ENCODE measurements at regions of chr1 and their contacts with region 1.

Region 1: DNA sequence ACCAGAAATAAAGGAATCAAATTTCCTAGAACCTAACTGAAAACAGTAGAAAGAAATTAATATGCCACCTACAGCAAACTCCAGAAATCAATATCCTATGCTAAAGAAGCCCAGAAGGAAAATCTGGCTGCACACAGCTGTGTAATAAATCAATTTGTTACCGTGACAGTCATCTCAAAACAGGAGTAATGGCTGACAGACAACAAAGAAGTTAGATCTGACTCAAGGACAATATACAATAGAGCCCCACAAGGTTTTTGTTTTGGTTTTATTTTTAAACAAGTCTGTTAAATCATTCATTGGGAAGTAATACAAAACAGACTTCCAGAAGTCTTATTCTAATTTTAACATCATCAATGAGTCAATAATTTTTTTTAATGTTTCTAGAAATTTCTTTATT is 168.4 kb downstream of the RERE start:
- DNase-seq: peak; percentile 85
- H3K4me3 ChIP-seq: no peak overlapping the region
- H3K27ac ChIP-seq: peak overlapping the region; percentile 33
- H3K4me1 ChIP-seq: peaks cover 35% of the 10 kb centered on the region
- H3K27me3 ChIP-seq: no peaks in the 10 kb centered on the region
- CTCF ChIP-seq: no peak
- POLR2A ChIP-seq: no peak

Region 2: GRCh38 chr1:8314346-8315280 is 334.4 kb before region 1 on chr1:
- CTCF ChIA-PET with region 1: no interaction called
- POLR2A ChIA-PET with region 1: no interaction called
- dilution Hi-C with region 1: no loop called
- intact Hi-C with region 1: no loop called
- DNase-seq: peak; percentile 76
- H3K4me3 ChIP-seq: no peak overlapping the region
- H3K27ac ChIP-seq: no peak overlapping the region
- H3K4me1 ChIP-seq: peaks cover 7% of the 10 kb centered on the region
- H3K27me3 ChIP-seq: no peaks in the 10 kb centered on the region
- CTCF ChIP-seq: peak; percentile 86 to 88
- POLR2A ChIP-seq: no peak

Region 3: DNA sequence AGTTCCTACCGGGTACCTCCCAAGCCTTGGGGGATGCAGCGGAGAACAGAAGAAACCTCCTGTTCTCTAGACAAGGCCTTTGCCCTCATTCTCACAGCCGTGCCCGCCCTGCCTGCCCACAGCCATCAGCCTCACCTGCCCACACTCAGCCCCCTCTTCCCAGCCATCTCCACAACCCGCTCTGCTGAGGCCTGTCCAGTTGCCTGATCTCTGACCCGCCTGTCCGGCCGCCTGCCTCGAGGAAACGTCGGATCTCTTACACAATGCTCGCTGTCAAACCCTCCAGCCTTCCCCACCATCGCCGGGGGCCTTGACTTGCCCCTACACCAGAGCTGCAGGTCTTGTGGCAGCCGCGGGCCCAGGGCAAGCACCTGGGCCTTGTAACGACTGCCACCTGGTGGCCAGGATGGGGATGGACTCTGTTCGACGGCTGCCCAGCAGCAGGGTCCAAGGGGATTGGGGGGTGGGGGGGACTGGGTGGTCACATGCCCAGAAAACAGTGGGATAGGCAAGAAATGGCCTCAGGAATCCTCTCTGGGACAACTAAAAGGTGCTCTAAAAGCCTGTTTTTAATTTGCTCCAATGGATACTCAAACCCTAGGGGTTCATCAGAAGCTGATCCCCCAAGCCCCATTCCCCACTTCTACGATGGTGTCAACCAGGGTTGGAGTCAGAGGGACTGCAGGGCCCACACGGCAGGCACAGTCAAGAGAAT is 300.1 kb before region 1 on chr1:
- CTCF ChIA-PET with region 1: no interaction called
- POLR2A ChIA-PET with region 1: no interaction called
- dilution Hi-C with region 1: no loop called
- intact Hi-C with region 1: no loop called
- DNase-seq: peak; percentile 48
- H3K4me3 ChIP-seq: no peak overlapping the region
- H3K27ac ChIP-seq: no peak overlapping the region
- H3K4me1 ChIP-seq: peaks cover 16% of the 10 kb centered on the region
- H3K27me3 ChIP-seq: no peaks in the 10 kb centered on the region
- CTCF ChIP-seq: peak; percentile 65 to 84
- POLR2A ChIP-seq: no peak

Region 4: GRCh38 chr1:8600336-8600735 is 48.7 kb before region 1 on chr1:
- CTCF ChIA-PET with region 1: interaction called, 5 read pairs
- POLR2A ChIA-PET with region 1: no interaction called
- dilution Hi-C with region 1: no loop called
- intact Hi-C with region 1: loop called (anchors 1 kb)
- DNase-seq: peak; percentile 94
- H3K4me3 ChIP-seq: no peak overlapping the region
- H3K27ac ChIP-seq: peak overlapping the region; percentile 84
- H3K4me1 ChIP-seq: peaks cover 50% of the 10 kb centered on the region
- H3K27me3 ChIP-seq: no peaks in the 10 kb centered on the region
- CTCF ChIP-seq: no peak
- POLR2A ChIP-seq: no peak

Region 5: GRCh38 chr1:8625981-8626898 is 22.8 kb before region 1 on chr1:
- CTCF ChIA-PET with region 1: interaction called, 6 read pairs
- POLR2A ChIA-PET with region 1: no interaction called
- dilution Hi-C with region 1: no loop called
- intact Hi-C with region 1: loop called (anchors 2 kb)
- DNase-seq: no peak
- H3K4me3 ChIP-seq: no peak overlapping the region
- H3K27ac ChIP-seq: no peak overlapping the region
- H3K4me1 ChIP-seq: peaks cover 4% of the 10 kb centered on the region
- H3K27me3 ChIP-seq: no peaks in the 10 kb centered on the region
- CTCF ChIP-seq: no peak
- POLR2A ChIP-seq: no peak

Region 6: GRCh38 chr1:8660411-8660828 is 11.4 kb after region 1 on chr1:
- CTCF ChIA-PET with region 1: interaction called, 19 read pairs
- POLR2A ChIA-PET with region 1: interaction called, 8 read pairs
- dilution Hi-C with region 1: no loop called
- intact Hi-C with region 1: loop called (anchors 2 kb)
- DNase-seq: peak; percentile 92
- H3K4me3 ChIP-seq: no peak overlapping the region
- H3K27ac ChIP-seq: peak overlapping the region; percentile 70
- H3K4me1 ChIP-seq: peaks cover 34% of the 10 kb centered on the region
- H3K27me3 ChIP-seq: no peaks in the 10 kb centered on the region
- CTCF ChIP-seq: no peak
- POLR2A ChIP-seq: no peak

Region 7: DNA sequence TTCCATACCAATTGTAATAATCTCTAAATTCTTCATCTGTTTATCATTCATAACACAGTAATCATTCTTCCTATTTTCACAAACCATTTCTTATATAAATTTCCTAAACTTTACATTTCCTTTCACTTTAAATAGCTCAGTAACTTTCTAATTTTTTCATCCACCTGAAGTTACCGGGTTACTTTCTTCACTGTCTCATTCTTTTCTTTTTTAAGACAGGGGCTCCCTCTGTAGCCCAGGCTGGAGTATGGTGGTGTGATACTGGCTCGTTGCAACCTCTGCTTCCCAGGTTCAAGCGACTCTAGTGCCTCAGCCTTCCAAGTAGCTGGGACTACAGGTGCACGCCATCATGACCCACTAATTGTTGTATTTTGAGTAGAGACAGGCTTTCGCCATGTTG is 127.1 kb after region 1 on chr1:
- CTCF ChIA-PET with region 1: no interaction called
- POLR2A ChIA-PET with region 1: no interaction called
- dilution Hi-C with region 1: no loop called
- intact Hi-C with region 1: no loop called
- DNase-seq: no peak
- H3K4me3 ChIP-seq: no peak overlapping the region
- H3K27ac ChIP-seq: no peak overlapping the region
- H3K4me1 ChIP-seq: peaks cover 10% of the 10 kb centered on the region
- H3K27me3 ChIP-seq: no peaks in the 10 kb centered on the region
- CTCF ChIP-seq: no peak
- POLR2A ChIP-seq: no peak